ENCODE measurements at regions of chr1 and their contacts with region 1.

Region 1: GRCh38 chr1:92291372-92291999 is 7.3 kb downstream of the GLMN start:
- DNase-seq: no peak
- H3K4me3 ChIP-seq: no peak overlapping the region
- H3K27ac ChIP-seq: no peak overlapping the region
- H3K4me1 ChIP-seq: no peaks in the 10 kb centered on the region
- H3K27me3 ChIP-seq: no peaks in the 10 kb centered on the region
- CTCF ChIP-seq: peak in 2 of 3 experiments; percentile 36 to 50
- POLR2A ChIP-seq: no peak

Region 2: DNA sequence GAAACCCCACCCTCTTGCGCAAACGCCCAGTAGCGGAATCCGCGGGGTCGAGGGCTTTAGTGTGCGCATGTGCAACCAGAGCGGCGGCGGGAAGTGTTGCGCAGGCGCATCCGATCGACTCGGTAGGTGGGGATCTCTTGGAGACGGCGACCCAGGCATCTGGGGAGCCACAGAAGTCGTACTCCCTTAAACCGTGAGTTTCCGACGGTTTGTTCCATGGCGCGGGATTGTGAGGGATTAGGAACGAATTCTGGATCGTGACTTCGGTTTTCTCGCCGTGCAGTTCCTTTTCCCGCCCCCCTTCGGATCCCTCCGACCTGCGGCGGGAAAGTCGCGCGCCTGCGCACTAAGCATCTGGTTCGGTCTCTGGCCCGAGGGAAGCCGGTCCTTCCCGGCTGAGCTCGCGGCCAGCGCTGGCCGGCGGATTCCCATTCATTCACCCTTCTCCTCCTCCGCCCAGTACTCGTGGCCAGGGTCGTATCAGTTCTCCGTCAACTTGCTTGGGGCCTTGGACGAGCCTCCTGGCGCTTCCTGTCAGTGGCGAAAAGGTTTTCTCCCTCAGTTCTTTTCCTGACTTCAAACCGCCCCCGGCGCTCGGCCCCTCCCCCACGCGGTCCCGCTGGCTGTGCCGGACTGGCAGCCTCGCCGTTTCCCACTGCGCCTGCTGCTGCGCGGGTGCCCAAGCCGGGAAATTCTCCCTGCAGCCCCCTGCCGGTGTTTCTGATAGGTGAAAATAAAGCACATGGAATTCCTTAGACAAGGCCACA is 790.5 kb before region 1 on chr1 and contains the start of gene CDC7:
- intact Hi-C with region 1: loop called (anchors 10 kb)
- DNase-seq: peak in 1 of 2 donors; percentile 93
- H3K4me3 ChIP-seq: peak within 1 kb of the TSS; percentile 58 to 64
- H3K27ac ChIP-seq: peak within 1 kb of the TSS; percentile 87
- H3K4me1 ChIP-seq: peaks cover 14% of the 10 kb centered on the region
- H3K27me3 ChIP-seq: no peaks in the 10 kb centered on the region
- CTCF ChIP-seq: peak in 1 of 3 experiments; percentile 25
- POLR2A ChIP-seq: no peak
- total RNA-seq, gene CDC7: 3.4 TPM